GM12878 (cell line): ENCODE measurements at regions of chr3 and their contacts with region 1.

Region 1: GRCh38 chr3:94862703-94863102 is 799.8 kb downstream of the NSUN3 start:
- DNase-seq: no peak
- ATAC-seq: peak; percentile 69
- H3K4me3 ChIP-seq: no peak overlapping the region
- H3K27ac ChIP-seq: no peak overlapping the region
- H3K4me1 ChIP-seq: no peaks in the 10 kb centered on the region
- H3K27me3 ChIP-seq: no peaks in the 10 kb centered on the region
- CTCF ChIP-seq: peak; percentile 36 to 62 (median 53)
- EP300 ChIP-seq: no peak
- POLR2A ChIP-seq: no peak
- RAD21 ChIP-seq: peak; percentile 43

Region 2: DNA sequence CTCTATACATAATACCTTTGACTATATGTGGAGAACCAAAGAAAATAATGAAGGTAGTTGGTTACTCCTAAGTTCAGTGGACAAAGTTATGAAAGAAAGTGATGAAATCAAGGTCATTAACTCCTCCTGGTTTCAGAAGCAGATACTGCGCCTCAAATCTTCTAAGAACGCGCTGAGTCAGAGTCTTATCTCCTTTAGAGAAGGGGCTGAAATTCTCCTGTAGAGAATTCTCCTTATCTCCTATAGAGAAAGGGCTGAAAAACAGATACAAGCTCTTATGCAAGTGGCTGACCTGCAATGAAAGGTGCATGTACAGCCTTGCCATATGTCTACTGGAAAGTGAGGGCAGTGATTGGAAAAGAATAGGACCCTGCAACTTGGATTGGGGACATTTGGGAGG is 24.4 kb after region 1 on chr3:
- CTCF ChIA-PET with region 1: no interaction called
- POLR2A ChIA-PET with region 1: no interaction called
- RAD21 ChIA-PET with region 1: no interaction called
- SMC1A ChIA-PET with region 1: no interaction called
- in situ Hi-C with region 1: no loop called
- intact Hi-C with region 1: loop called (anchors 2 kb)
- DNase-seq: no peak
- ATAC-seq: no peak
- H3K4me3 ChIP-seq: no peak overlapping the region
- H3K27ac ChIP-seq: no peak overlapping the region
- H3K4me1 ChIP-seq: no peaks in the 10 kb centered on the region
- H3K27me3 ChIP-seq: no peaks in the 10 kb centered on the region
- CTCF ChIP-seq: no peak
- EP300 ChIP-seq: no peak
- POLR2A ChIP-seq: no peak
- RAD21 ChIP-seq: no peak